Esophagus muscularis mucosa (tissue), 4 donors: ENCODE measurements at regions of chr20 and their contacts with region 1.

Region 1: GRCh38 chr20:2873010-2873746 is at the start of gene PTPRA:
- DNase-seq: peak; percentile 96
- H3K4me3 ChIP-seq: peak within 1 kb of the TSS; percentile 70 to 100 (median 98)
- H3K27ac ChIP-seq: peak within 1 kb of the TSS; percentile 73 to 94 (median 88)
- H3K4me1 ChIP-seq: peaks cover 30 to 56% (median 54%) of the 10 kb centered on the region in 4 donors
- H3K27me3 ChIP-seq: peaks cover 0 to 7% (median 0%) of the 10 kb centered on the region in 4 donors
- CTCF ChIP-seq: no peak
- EP300 ChIP-seq: no peak
- POLR2A ChIP-seq: peak; percentile 59
- total RNA-seq, gene PTPRA: 49.2 to 80.8 (median 60.4) TPM

Region 2: DNA sequence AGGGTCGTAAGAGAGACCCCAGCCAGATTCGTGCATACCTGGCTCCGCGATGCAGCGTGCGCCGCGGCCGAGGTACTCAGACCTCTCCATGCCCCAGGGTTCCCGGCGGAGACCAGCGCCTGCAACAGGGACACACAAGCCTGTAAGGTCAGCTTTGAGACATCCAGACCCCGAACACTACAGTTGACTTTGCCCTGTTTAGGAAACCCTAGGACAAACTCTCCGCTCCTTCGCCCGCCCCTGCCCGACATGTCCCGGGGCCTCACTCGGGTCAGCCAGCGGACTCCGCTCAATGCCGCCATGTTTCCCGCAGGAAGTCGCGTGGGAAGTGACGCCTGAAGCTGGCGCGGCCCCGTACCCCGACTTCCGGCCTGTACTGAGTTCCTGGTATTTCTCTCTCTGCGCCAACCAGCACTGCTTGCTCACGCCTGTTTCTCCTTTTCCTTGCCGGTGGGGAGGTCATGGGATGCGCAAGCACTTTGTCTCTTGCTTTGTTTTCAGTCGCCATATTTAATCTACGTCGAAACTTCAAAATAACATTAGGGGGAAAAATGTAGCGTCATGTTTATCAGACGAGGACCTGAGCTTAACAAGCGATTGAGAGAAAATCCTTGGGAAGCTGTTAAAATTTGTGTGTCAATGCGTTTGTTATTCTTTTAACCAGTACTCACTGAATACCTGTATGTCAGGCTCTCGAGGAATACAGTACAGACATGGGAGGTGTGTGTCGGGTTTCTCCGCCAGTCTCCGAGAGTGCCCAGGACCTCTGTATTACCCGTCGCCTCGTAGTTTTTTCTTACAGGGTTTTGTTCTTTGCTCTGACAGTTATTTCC is 209.1 kb before region 1 on chr20 and contains the start of gene IDH3B:
- intact Hi-C with region 1: loop called (anchors 10 kb)
- DNase-seq: peak; percentile 99
- H3K4me3 ChIP-seq: peak within 1 kb of the TSS; percentile 78 to 86 (median 81)
- H3K27ac ChIP-seq: peak within 1 kb of the TSS; percentile 85 to 90 (median 89)
- H3K4me1 ChIP-seq: peaks cover 17 to 21% (median 20%) of the 10 kb centered on the region in 4 donors
- H3K27me3 ChIP-seq: no peaks in the 10 kb centered on the region
- CTCF ChIP-seq: no peak
- EP300 ChIP-seq: no peak
- POLR2A ChIP-seq: no peak
- total RNA-seq, gene IDH3B: 115 to 122 (median 118) TPM

Region 3: DNA sequence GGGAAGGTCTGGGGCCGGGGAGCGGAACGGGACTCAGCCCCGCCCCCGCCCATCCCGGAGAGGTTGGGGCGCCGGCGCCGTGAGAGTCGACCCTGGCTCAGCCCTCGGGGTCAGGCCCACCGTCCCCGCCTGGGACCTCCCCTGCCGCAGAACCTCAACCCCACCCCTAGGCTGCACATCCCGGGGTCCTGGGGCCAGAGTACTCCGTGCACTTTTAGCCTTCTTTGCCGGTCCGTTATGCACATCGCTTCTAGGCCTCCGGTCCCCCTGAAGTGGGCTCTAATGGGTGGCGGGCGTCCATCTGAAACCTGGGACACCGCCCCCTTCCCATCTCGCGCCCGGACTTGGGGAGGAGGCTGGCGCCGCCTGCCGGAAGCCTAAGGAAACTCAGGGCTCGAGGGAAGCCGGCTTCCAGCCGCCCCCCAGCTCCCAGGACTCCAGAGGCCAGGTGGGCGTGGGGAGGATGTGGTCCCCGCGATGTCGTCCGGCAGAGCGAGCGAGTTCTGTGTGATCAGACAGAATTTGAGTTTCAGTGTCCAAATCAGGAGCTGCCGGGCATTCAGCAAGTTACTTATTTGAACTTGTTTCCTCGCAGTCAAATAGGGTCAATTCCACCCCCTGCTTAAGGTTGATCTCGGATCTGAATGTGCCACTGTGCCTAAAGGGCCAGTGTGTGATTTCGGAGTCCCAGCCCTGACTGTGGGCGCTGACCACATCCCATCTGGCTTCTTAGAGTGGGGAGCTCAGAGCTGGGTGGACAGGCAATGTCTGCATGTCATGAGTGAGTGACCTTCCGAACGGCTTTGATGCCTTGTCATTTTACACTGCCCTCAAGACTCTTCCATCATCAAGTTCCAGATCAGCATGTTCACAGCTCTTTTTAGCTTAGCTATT is 120.4 kb before region 1 on chr20:
- intact Hi-C with region 1: no loop called
- DNase-seq: no peak
- H3K4me3 ChIP-seq: peak overlapping the region; percentile 45 to 64 (median 49)
- H3K27ac ChIP-seq: no peak overlapping the region
- H3K4me1 ChIP-seq: peaks cover 20 to 40% (median 36%) of the 10 kb centered on the region in 4 donors
- H3K27me3 ChIP-seq: peaks cover 0 to 86% (median 35%) of the 10 kb centered on the region in 4 donors
- CTCF ChIP-seq: peak; percentile 34 to 61 (median 35)
- EP300 ChIP-seq: no peak
- POLR2A ChIP-seq: no peak

Region 4: DNA sequence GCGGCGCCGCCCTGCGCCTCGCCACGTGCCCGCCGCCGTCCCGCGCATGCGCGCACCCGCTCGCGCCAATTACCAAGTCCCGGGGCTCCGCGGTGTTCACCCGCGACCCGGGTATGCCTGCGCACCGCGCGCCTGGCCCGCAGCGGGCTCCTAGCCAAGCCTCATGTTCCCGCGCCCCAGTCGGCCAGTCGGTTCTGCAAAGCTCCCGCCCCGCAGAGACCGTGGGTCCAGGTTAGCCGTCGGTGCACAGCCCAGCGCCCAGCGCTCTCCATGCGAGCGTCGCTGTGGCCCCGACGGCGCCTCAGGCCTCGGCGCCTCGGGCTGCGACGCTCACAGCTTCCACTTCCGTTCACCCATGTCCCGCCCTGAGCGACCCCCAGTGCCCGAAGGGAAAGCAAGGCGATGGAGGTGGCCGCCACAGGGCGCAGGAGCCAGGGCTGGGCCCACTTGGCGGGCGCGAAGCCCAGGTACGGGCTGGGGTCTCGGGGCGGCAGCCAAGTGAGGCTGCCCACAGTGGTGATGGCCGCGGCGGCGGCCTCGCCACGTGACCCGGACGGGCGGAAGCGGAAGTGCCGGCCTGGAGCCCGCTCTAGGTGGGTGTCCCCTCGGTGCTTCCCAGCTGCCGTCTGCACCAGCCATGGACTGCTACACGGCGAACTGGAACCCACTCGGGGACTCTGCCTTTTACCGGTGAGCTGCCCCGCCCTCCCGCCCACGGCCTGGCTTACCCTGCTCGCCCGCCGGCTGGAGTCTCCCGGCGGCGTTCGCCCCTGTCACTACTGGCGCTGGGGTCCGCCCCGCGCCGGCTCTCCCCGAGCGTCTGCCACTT is 32.8 kb before region 1 on chr20 and contains the starts of genes PCED1A and VPS16:
- intact Hi-C with region 1: loop called (anchors 2 kb)
- DNase-seq: peak; percentile 96
- H3K4me3 ChIP-seq: peak within 1 kb of the TSS; percentile 84 to 96 (median 93)
- H3K27ac ChIP-seq: peak within 1 kb of the TSS; percentile 89 to 94 (median 91)
- H3K4me1 ChIP-seq: peaks cover 15 to 32% (median 25%) of the 10 kb centered on the region in 4 donors
- H3K27me3 ChIP-seq: no peaks in the 10 kb centered on the region
- CTCF ChIP-seq: no peak
- EP300 ChIP-seq: no peak
- POLR2A ChIP-seq: no peak
- total RNA-seq, gene PCED1A: 15.1 to 24.1 (median 22.5) TPM
- total RNA-seq, gene VPS16: 22.0 to 37.5 (median 30.2) TPM